Vagina (tissue), 2 donors: ENCODE measurements at regions of chr15 and their contacts with region 1.

Region 1: DNA sequence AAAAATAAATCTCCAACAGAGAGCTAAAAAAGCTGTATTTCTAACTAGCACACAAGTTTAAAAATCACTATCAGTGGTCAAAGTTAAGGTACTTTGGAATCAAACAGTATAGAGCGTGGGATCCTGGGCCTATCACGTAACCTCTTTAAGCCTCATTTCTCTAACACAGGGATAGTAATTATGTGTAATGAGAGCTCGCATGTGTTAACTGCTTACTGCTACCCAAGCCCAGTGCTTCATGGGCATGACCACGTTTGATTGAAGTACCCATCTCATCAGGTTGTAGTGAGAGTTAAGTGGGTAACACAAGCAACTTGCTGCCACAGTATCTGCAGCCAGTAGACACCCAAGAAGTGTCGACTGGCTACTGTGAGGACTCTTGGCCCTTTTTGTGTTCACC is 28.2 kb upstream of the NOX5 start:
- DNase-seq: no peak
- H3K4me3 ChIP-seq: no peak overlapping the region
- H3K27ac ChIP-seq: no peak overlapping the region
- H3K4me1 ChIP-seq: no peaks in the 10 kb centered on the region
- H3K27me3 ChIP-seq: no peaks in the 10 kb centered on the region
- CTCF ChIP-seq: no peak
- POLR2A ChIP-seq: no peak

Region 2: GRCh38 chr15:67274236-67274635 is 1712.1 kb before region 1 on chr15:
- intact Hi-C with region 1: loop called (anchors 5 kb)
- DNase-seq: no peak
- H3K4me3 ChIP-seq: no peak overlapping the region
- H3K27ac ChIP-seq: no peak overlapping the region
- H3K4me1 ChIP-seq: no peaks in the 10 kb centered on the region
- H3K27me3 ChIP-seq: no peaks in the 10 kb centered on the region
- CTCF ChIP-seq: no peak
- POLR2A ChIP-seq: no peak

Region 3: DNA sequence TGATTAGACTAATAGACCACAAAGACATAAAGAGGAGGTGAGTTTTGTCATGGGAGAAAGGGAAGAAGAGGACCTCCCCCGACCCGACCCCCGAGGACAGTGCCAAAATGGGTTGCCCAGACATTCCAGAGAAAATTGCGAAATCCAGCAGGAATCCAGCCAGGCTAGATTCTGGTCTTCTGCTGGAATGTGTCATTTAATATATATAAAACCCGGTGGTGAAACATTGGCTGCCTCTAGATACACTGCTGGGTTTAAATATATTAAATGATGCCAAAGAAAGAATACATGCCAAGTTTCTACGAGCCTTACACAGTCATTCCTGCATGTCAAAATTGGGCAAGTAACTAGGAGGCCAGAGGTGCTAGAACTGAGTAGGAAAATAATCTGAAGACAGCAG is 101.3 kb before region 1 on chr15:
- intact Hi-C with region 1: no loop called
- DNase-seq: no peak
- H3K4me3 ChIP-seq: no peak overlapping the region
- H3K27ac ChIP-seq: no peak overlapping the region
- H3K4me1 ChIP-seq: peaks cover 12% of the 10 kb centered on the region
- H3K27me3 ChIP-seq: no peaks in the 10 kb centered on the region
- CTCF ChIP-seq: no peak
- POLR2A ChIP-seq: no peak